Motor neuron (in vitro differentiated cells): ENCODE measurements at regions of chr1 and their contacts with region 1.

Region 1: GRCh38 chr1:66711420-66711819 is 40.8 kb upstream of the DYNLT5 start:
- ATAC-seq: peak in 3 of 8 experiments; percentile 36 to 68 (median 40)
- H3K4me3 ChIP-seq: no peak overlapping the region
- H3K27ac ChIP-seq: no peak overlapping the region
- H3K4me1 ChIP-seq: no peaks in the 10 kb centered on the region

Region 2: DNA sequence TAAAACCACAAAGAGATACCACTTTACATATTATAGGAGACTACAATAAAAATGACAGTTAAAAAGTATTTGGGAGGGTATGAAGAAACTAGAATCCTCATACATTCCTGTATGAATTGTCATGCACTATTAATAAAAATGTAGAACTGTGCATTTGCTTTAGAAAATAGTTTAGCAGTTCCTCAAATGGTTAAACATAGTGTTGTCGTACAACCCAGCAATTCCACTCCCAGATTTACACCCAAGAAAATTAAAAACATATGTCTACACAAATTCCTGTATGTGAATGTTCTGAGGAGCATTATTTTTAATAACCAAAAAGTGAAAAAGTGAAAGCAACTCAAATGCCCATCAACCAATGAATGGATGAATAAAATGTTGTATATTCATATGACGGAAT is 941.8 kb before region 1 on chr1:
- in situ Hi-C with region 1: no loop called
- ATAC-seq: peak in 2 of 8 experiments; percentile 74 to 81
- H3K4me3 ChIP-seq: no peak overlapping the region
- H3K27ac ChIP-seq: no peak overlapping the region
- H3K4me1 ChIP-seq: no peaks in the 10 kb centered on the region

Region 3: GRCh38 chr1:66503841-66504470 is 207.5 kb before region 1 on chr1:
- in situ Hi-C with region 1: loop called in 1 of 9 experiments (anchors 25 kb)
- ATAC-seq: peak in 5 of 8 experiments; percentile 37 to 88 (median 73)
- H3K4me3 ChIP-seq: no peak overlapping the region
- H3K27ac ChIP-seq: no peak overlapping the region
- H3K4me1 ChIP-seq: peaks cover 0 to 19% of the 10 kb centered on the region in 2 donors

Region 4: GRCh38 chr1:66533804-66534740 is 177.3 kb before region 1 on chr1 and contains the start of gene SGIP1:
- in situ Hi-C with region 1: no loop called
- ATAC-seq: peak; percentile 84 to 95 (median 94)
- H3K4me3 ChIP-seq: peak within 1 kb of the TSS; percentile 31 to 52 (median 39)
- H3K27ac ChIP-seq: peak within 1 kb of the TSS; percentile 67 to 86
- H3K4me1 ChIP-seq: peaks cover 5 to 14% of the 10 kb centered on the region in 2 donors
- total RNA-seq, gene SGIP1: 0.05 to 82.9 (median 26.2) TPM in 7 of 8 experiments, not detected in the other

Region 5: DNA sequence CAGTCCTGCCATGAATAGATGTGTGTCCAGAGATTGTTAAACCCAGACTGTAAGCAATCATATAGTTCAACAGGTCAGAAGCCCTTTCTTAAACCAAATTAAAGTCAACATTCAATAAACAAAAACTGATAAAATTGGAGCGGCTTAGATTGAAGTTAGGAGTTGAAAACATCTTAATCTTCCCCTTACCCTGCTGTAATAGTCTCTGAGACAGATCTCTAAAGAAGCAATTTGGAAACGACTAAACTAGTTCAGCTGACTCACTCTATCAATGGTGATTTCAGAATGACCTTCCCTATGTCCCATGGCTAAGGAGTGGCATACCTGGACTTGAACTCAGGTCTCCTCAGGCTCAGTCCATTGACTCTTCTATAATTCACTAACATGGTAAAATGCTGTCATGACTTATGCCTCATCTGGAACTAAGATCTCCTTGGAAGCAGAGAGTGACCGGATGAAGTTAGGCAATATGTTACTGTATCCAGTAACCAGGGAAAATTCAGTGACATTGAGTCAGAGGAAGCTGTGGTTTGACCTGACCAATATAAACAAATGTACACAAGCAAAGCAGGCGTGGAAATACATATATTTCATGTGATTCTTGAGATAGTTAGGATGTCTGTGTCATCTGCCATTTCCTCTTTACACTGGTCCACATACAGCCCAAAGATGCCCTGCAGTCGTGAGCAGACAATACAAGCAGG is 147.3 kb before region 1 on chr1:
- in situ Hi-C with region 1: no loop called
- ATAC-seq: peak in 2 of 8 experiments; percentile 74 to 84
- H3K4me3 ChIP-seq: no peak overlapping the region
- H3K27ac ChIP-seq: no peak overlapping the region
- H3K4me1 ChIP-seq: no peaks in the 10 kb centered on the region

Region 6: DNA sequence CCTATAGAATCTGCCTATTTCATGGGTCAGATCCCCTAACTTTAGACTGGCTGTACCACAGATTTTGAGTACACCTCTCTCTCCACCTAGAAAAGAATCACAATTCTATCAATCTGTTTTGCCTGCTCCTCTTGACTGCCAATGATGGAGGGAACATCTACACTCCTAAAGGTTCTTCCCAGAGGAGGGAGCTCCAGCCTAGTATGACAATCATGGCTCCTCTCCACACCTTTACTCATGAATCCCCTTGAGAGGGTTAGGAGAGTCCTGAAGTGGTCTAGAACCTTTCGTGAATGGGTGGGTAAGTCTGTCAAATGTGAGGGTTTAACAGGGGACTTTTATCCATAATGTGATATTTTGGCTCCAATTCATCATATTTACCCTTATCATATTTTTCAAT is 165.2 kb after region 1 on chr1:
- in situ Hi-C with region 1: no loop called
- ATAC-seq: no peak
- H3K4me3 ChIP-seq: no peak overlapping the region
- H3K27ac ChIP-seq: no peak overlapping the region
- H3K4me1 ChIP-seq: no peaks in the 10 kb centered on the region